ENCODE measurements at regions of chr4 and their contacts with region 1.

Region 1: GRCh38 chr4:184733654-184734524 is at the start of gene CENPU:
- DNase-seq: peak; percentile 98
- ATAC-seq: peak; percentile 95
- H3K4me3 Mint-ChIP-seq: peak within 1 kb of the TSS; percentile 98
- H3K27ac Mint-ChIP-seq: peak within 1 kb of the TSS; percentile 94
- H3K4me1 Mint-ChIP-seq: peaks cover 24% of the 10 kb centered on the region
- H3K27me3 Mint-ChIP-seq: no peaks in the 10 kb centered on the region
- total RNA-seq, gene CENPU: 87.7 to 88.4 TPM

Region 2: DNA sequence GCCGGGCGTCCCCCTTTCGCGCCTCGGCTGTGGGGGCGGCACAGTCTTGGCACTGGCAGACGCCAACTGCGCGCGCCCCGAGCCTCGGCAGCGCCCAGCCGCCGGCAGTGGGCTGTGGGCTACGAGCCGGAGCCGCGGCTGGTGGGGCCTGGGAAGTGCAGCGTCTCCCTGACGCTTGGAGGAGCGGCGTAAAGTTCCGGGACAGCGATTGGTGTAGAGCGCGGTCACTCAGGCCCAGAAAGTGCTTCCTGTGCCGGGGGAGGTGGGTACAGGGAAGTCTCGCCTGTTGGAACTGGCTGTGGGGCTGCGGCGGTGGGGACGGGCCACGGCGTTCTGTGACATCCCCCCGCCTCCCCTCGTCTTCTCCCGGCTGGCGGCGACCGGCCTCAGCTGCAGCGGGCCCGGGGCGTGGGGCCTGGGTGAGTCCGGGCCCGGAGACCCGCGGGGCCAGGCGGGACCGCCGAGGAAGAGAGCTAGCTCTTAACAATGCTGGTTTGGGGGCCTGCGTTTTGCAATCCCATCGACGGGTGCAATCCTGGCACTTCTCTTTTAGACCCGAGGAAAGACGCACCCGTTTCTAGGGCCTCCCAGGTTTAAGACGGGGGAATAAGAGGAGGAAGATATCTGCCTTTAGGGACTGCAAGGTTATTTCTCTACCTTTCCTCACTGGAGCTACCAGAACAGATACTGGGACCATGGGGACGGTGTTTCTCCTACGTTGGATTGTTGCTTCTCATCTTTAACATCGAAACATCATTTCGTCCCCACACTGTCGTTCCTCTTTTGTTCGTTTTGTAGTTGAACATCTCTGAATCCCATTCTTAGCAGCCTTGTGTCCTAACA is 1074.6 kb before region 1 on chr4 and contains the starts of genes RWDD4 and TRAPPC11:
- CTCF ChIA-PET with region 1: no interaction called
- POLR2A ChIA-PET with region 1: no interaction called
- intact Hi-C with region 1: loop called in 1 of 2 experiments (anchors 1 kb)
- DNase-seq: peak; percentile 97
- ATAC-seq: peak; percentile 100
- H3K4me3 Mint-ChIP-seq: peak within 1 kb of the TSS; percentile 97
- H3K27ac Mint-ChIP-seq: peak within 1 kb of the TSS; percentile 95
- H3K4me1 Mint-ChIP-seq: peaks cover 35% of the 10 kb centered on the region
- H3K27me3 Mint-ChIP-seq: no peaks in the 10 kb centered on the region
- total RNA-seq, gene RWDD4: 19.4 to 26.5 TPM
- total RNA-seq, gene TRAPPC11: 27.7 to 37.9 TPM

Region 3: GRCh38 chr4:184282251-184282713 is 451.6 kb before region 1 on chr4:
- CTCF ChIA-PET with region 1: no interaction called
- POLR2A ChIA-PET with region 1: interaction called, 3 read pairs
- intact Hi-C with region 1: loop called in 1 of 2 experiments (anchors 5 kb)
- DNase-seq: peak; percentile 82
- ATAC-seq: peak; percentile 74
- H3K4me3 Mint-ChIP-seq: peak overlapping the region; percentile 56
- H3K27ac Mint-ChIP-seq: peak overlapping the region; percentile 93
- H3K4me1 Mint-ChIP-seq: peaks cover 65% of the 10 kb centered on the region
- H3K27me3 Mint-ChIP-seq: peaks cover 4% of the 10 kb centered on the region

Region 4: GRCh38 chr4:184649026-184649970 is 84.6 kb before region 1 on chr4 and contains the starts of genes CASP3 and PRIMPOL:
- CTCF ChIA-PET with region 1: no interaction called
- POLR2A ChIA-PET with region 1: interaction called, 15 read pairs
- intact Hi-C with region 1: loop called (anchors 1 kb)
- DNase-seq: peak; percentile 98
- ATAC-seq: peak; percentile 88
- H3K4me3 Mint-ChIP-seq: peak within 1 kb of the TSS; percentile 94
- H3K27ac Mint-ChIP-seq: peak within 1 kb of the TSS; percentile 95
- H3K4me1 Mint-ChIP-seq: peaks cover 51% of the 10 kb centered on the region
- H3K27me3 Mint-ChIP-seq: no peaks in the 10 kb centered on the region
- total RNA-seq, gene CASP3: 44.3 to 65.7 TPM
- total RNA-seq, gene PRIMPOL: 20.4 to 24.3 TPM

Region 5: GRCh38 chr4:184762100-184762499 is 28.2 kb after region 1 on chr4:
- CTCF ChIA-PET with region 1: no interaction called
- POLR2A ChIA-PET with region 1: interaction called, 3 read pairs
- intact Hi-C with region 1: loop called in 1 of 2 experiments (anchors 1 kb)
- DNase-seq: peak; percentile 55
- ATAC-seq: peak; percentile 99
- H3K4me3 Mint-ChIP-seq: peak overlapping the region; percentile 20
- H3K27ac Mint-ChIP-seq: peak overlapping the region; percentile 89
- H3K4me1 Mint-ChIP-seq: peaks cover 22% of the 10 kb centered on the region
- H3K27me3 Mint-ChIP-seq: no peaks in the 10 kb centered on the region

Region 6: DNA sequence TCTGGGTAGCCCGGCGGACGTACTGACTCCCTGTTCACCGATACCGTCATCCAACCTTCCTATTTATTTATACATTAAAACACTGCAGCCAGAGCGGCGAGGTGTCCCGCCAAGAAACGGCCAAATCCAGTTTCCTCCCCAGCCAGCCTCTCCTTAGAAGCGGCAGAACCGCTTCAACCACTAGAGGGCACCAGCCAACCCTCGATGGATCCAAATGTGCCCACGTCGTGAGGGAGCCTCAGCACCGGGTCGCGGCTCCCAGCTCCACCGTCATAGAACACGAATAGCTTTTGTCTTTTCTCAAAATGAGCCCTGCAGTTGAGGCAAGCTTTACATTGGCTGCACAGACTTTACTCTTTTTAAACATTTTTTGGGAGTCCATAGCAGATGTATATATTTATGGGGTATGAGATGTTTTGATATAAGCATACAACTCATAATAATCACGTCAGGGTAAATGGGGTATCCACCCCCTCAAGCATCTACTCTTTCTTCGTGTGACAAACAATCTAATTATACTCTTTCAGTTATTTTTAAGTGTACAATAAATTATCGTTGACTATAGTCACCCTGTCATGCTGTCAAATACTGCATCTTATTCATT is 271.4 kb after region 1 on chr4:
- CTCF ChIA-PET with region 1: no interaction called
- POLR2A ChIA-PET with region 1: no interaction called
- intact Hi-C with region 1: no loop called
- DNase-seq: peak; percentile 91
- ATAC-seq: peak; percentile 98
- H3K4me3 Mint-ChIP-seq: peak overlapping the region; percentile 31
- H3K27ac Mint-ChIP-seq: no peak overlapping the region
- H3K4me1 Mint-ChIP-seq: peaks cover 4% of the 10 kb centered on the region
- H3K27me3 Mint-ChIP-seq: peaks cover 39% of the 10 kb centered on the region

Region 7: GRCh38 chr4:185020293-185020808 is 286.5 kb after region 1 on chr4:
- CTCF ChIA-PET with region 1: no interaction called
- POLR2A ChIA-PET with region 1: no interaction called
- intact Hi-C with region 1: no loop called
- DNase-seq: peak; percentile 31
- ATAC-seq: no peak
- H3K4me3 Mint-ChIP-seq: no peak overlapping the region
- H3K27ac Mint-ChIP-seq: no peak overlapping the region
- H3K4me1 Mint-ChIP-seq: peaks cover 9% of the 10 kb centered on the region
- H3K27me3 Mint-ChIP-seq: peaks cover 68% of the 10 kb centered on the region

Region 8: DNA sequence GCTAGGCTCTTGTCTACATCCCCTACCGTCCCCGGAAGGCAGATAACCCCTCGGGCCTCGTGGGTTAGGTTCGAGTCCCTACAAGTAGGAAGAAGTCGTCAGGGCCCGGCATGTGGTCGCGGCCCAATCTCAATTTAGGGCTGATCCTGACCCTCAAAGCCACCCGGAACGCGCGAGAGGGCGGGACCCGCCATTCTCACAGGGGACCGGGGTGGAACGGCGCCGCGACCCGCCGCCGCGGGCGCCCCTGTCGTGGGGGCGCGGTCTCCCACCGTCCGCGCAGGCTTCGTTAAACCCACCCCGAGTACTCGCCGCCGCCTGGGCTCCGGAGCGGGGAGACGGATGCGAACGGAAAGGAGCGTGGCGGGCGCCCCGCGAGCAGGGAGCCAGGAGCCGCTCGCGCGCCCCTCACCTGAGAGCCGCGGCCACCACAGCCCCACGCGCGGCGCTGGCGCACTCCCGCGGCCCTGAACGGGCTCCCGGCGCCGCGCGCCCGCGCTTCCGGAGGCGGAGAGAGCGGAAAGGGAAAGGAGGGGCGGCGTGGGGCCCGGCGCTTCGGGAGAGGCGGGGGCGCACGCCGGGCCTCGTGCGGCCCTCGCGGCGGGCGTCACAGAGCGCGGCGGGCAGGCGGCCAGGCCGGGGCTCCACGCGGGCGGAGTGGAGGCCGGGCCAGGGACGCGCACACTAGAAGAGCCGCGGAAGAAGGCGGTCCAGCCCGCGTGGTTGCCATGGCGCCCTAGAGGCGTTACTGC is 469.8 kb after region 1 on chr4 and contains the start of gene CFAP97:
- CTCF ChIA-PET with region 1: no interaction called
- POLR2A ChIA-PET with region 1: interaction called, 3 read pairs
- intact Hi-C with region 1: loop called in 1 of 2 experiments (anchors 1 kb)
- DNase-seq: peak; percentile 82
- ATAC-seq: peak; percentile 85
- H3K4me3 Mint-ChIP-seq: peak within 1 kb of the TSS; percentile 94
- H3K27ac Mint-ChIP-seq: peak within 1 kb of the TSS; percentile 97
- H3K4me1 Mint-ChIP-seq: peaks cover 41% of the 10 kb centered on the region
- H3K27me3 Mint-ChIP-seq: no peaks in the 10 kb centered on the region
- total RNA-seq, gene CFAP97: 54.6 to 81.8 TPM